Activated CD4-positive, alpha-beta T cell treated with anti-CD3 and anti-CD28 coated beads, Interleukin-2, amount 10 ng/mL, durations not matched to agents 24 days and 14 days (primary cell): ENCODE measurements at regions of chr1 and their contacts with region 1.

Region 1: DNA sequence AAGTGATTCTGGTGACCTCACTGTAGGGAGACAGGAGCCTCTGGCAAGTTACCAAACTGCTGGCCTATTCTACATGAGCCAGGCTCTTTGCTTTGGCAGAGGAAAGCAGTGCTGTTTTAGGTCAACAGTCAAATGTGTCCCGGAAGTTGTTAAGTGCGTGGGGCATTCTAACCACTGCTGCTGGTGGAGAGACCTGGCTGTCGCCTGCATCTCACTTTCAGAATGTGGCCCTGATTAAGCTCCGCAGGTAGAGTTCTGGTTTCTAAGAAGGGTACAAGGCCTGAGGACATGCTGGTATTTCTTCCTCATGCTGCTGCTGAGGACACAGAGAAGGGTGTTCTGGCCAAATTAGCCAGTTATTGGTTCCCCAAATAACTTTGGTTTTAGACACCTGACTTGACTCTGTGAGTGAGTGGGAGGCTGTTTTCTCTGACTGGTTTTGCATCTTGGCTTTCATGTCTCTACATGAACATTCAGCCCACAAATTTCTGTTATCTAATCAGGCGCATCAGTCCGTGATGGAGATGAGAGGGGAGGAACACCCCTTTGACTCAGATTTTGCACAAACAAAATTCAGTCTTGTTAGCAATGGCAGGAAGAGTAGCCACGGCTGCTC is 120.8 kb downstream of the LMO4 start:
- DNase-seq: no peak
- H3K4me3 Mint-ChIP-seq: no peak overlapping the region
- H3K27ac Mint-ChIP-seq: peak overlapping the region; percentile 16
- H3K4me1 Mint-ChIP-seq: peaks cover 3% of the 10 kb centered on the region
- H3K27me3 Mint-ChIP-seq: no peaks in the 10 kb centered on the region

Region 2: GRCh38 chr1:87402241-87403002 is 47.0 kb before region 1 on chr1:
- intact Hi-C with region 1: loop called (anchors 5 kb)
- DNase-seq: no peak
- H3K4me3 Mint-ChIP-seq: no peak overlapping the region
- H3K27ac Mint-ChIP-seq: no peak overlapping the region
- H3K4me1 Mint-ChIP-seq: peaks cover 19% of the 10 kb centered on the region
- H3K27me3 Mint-ChIP-seq: peaks cover 30% of the 10 kb centered on the region

Region 3: DNA sequence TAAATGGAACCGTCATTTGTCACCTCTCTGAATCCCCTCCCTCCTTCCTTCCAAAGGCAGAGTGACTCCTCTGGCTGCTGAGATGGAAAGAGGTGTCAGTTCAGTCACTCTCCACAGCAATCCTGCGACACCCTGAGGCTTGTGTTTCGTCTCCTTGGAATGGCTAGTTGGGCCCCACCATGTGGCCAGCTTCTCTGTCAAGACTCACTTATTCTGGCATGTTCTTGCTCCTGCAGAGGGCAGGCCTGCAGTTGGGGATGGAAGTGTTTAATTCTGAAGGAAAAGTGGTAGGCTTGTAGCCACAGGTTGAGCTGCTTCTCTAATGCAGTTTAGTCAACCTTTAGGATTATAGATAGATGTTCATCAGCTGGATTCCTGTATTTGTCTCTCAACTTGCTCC is 28.8 kb after region 1 on chr1:
- intact Hi-C with region 1: no loop called
- DNase-seq: peak; percentile 38
- H3K4me3 Mint-ChIP-seq: no peak overlapping the region
- H3K27ac Mint-ChIP-seq: no peak overlapping the region
- H3K4me1 Mint-ChIP-seq: no peaks in the 10 kb centered on the region
- H3K27me3 Mint-ChIP-seq: peaks cover 4% of the 10 kb centered on the region